Activated B cell treated with CpG ODN at 0.5 μM for 24 hours (primary cell): ENCODE measurements at regions of chr3 and their contacts with region 1.

Region 1: GRCh38 chr3:53195602-53196574 is 34.9 kb downstream of the PRKCD start:
- DNase-seq: peak; percentile 72
- ATAC-seq: peak; percentile 62
- H3K4me3 Mint-ChIP-seq: peak overlapping the region; percentile 19
- H3K27ac Mint-ChIP-seq: peak overlapping the region; percentile 24
- H3K4me1 Mint-ChIP-seq: peaks cover 46% of the 10 kb centered on the region
- H3K27me3 Mint-ChIP-seq: no peaks in the 10 kb centered on the region
- CTCF ChIP-seq: peak; percentile 98

Region 2: DNA sequence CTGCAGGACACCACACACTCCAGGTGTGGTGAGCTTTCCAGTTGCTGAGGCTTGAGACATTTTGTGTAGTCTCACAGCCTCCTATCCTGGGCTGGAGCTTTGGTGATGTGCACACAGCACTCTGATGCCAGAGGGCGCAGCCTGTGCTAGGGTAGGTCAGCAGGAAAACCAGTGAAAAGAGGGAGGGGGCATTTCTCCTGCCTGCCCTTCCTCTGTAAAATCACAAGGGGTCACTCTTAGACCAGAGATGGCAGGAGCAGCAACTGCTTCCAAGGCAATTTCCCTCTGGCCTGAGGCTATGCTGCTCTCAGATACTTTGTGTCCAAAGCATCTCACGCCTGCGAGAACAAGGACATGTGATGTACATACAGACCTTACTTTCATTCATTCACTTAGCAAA is 344.5 kb before region 1 on chr3:
- CTCF ChIA-PET with region 1: no interaction called
- POLR2A ChIA-PET with region 1: no interaction called
- intact Hi-C with region 1: loop called (anchors 1 kb)
- DNase-seq: no peak
- ATAC-seq: peak; percentile 71
- H3K4me3 Mint-ChIP-seq: no peak overlapping the region
- H3K27ac Mint-ChIP-seq: no peak overlapping the region
- H3K4me1 Mint-ChIP-seq: no peaks in the 10 kb centered on the region
- H3K27me3 Mint-ChIP-seq: no peaks in the 10 kb centered on the region
- CTCF ChIP-seq: no peak

Region 3: GRCh38 chr3:53114011-53114400 is 81.9 kb before region 1 on chr3:
- CTCF ChIA-PET with region 1: interaction called, 77 read pairs
- POLR2A ChIA-PET with region 1: interaction called, 6 read pairs
- intact Hi-C with region 1: loop called (anchors 1 kb)
- DNase-seq: peak; percentile 62
- ATAC-seq: peak; percentile 96
- H3K4me3 Mint-ChIP-seq: no peak overlapping the region
- H3K27ac Mint-ChIP-seq: no peak overlapping the region
- H3K4me1 Mint-ChIP-seq: no peaks in the 10 kb centered on the region
- H3K27me3 Mint-ChIP-seq: no peaks in the 10 kb centered on the region
- CTCF ChIP-seq: no peak

Region 4: GRCh38 chr3:53160660-53161449 is 35.0 kb before region 1 on chr3 and contains the start of gene PRKCD:
- CTCF ChIA-PET with region 1: interaction called, 24 read pairs
- POLR2A ChIA-PET with region 1: interaction called, 17 read pairs
- intact Hi-C with region 1: loop called (anchors 1 kb)
- DNase-seq: peak; percentile 77
- ATAC-seq: peak; percentile 66
- H3K4me3 Mint-ChIP-seq: peak within 1 kb of the TSS; percentile 87
- H3K27ac Mint-ChIP-seq: peak within 1 kb of the TSS; percentile 89
- H3K4me1 Mint-ChIP-seq: peaks cover 58% of the 10 kb centered on the region
- H3K27me3 Mint-ChIP-seq: peaks cover 2% of the 10 kb centered on the region
- CTCF ChIP-seq: no peak
- total RNA-seq, gene PRKCD: 60.4 and 63.9 TPM in 2 replicates

Region 5: GRCh38 chr3:53180305-53181023 is 15.4 kb before region 1 on chr3:
- CTCF ChIA-PET with region 1: interaction called, 6 read pairs
- POLR2A ChIA-PET with region 1: interaction called, 16 read pairs
- intact Hi-C with region 1: loop called (anchors 1 kb)
- DNase-seq: peak; percentile 60
- ATAC-seq: peak; percentile 97
- H3K4me3 Mint-ChIP-seq: peak overlapping the region; percentile 70
- H3K27ac Mint-ChIP-seq: peak overlapping the region; percentile 80
- H3K4me1 Mint-ChIP-seq: peaks cover 57% of the 10 kb centered on the region
- H3K27me3 Mint-ChIP-seq: no peaks in the 10 kb centered on the region
- CTCF ChIP-seq: no peak

Region 6: GRCh38 chr3:53231572-53232511 is 36.0 kb after region 1 on chr3:
- CTCF ChIA-PET with region 1: no interaction called
- POLR2A ChIA-PET with region 1: no interaction called
- intact Hi-C with region 1: no loop called
- DNase-seq: no peak
- ATAC-seq: no peak
- H3K4me3 Mint-ChIP-seq: no peak overlapping the region
- H3K27ac Mint-ChIP-seq: no peak overlapping the region
- H3K4me1 Mint-ChIP-seq: no peaks in the 10 kb centered on the region
- H3K27me3 Mint-ChIP-seq: no peaks in the 10 kb centered on the region
- CTCF ChIP-seq: no peak